Body of pancreas (tissue), 4 donors: ENCODE measurements at regions of chr1 and their contacts with region 1.

Region 1: GRCh38 chr1:42747125-42747524 is 7.1 kb upstream of the CLDN19 start:
- DNase-seq: peak; percentile 44 to 60 (median 46)
- ATAC-seq: no peak
- H3K4me3 ChIP-seq: no peak overlapping the region
- H3K27ac ChIP-seq: no peak overlapping the region
- H3K4me1 ChIP-seq: no peaks in the 10 kb centered on the region
- H3K27me3 ChIP-seq: no peaks in the 10 kb centered on the region
- CTCF ChIP-seq: peak; percentile 31 to 59 (median 54)
- POLR2A ChIP-seq: no peak

Region 2: DNA sequence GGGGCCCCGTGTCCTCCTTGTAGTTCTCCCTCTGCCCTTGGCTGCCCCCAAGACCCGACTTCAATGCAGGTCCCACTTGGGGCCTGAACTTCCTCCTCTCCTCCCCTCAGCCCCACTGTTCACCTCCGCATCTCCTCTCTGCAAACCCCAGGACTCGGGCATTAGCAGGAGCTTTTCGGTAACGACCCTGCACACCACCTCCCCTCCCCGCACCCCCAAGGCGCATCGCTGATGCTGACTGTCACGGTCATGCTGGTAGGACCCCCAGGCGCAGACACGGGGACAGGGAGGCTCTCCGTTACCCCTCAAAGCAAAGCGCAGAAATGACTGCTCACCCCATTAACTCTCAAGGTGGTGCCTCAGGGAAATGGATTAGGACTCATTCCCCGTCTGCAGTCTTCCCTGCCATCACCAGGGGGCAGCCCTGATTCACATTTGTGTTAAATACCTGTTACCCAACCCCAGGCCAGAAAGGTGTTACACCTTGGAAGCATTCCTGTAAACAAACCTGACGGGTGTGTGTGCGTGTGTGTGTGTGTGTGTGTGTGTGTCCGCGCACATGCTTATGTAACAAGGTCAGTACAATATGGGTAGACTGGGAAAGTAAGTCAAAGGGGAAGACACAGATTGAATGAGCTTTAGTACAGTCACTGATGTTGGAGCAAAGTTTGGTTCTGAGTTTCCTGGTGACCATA is 600.4 kb before region 1 on chr1:
- intact Hi-C with region 1: loop called (anchors 10 kb)
- DNase-seq: peak; percentile 94 to 97 (median 96)
- ATAC-seq: peak; percentile 98
- H3K4me3 ChIP-seq: no peak overlapping the region
- H3K27ac ChIP-seq: peak overlapping the region in 1 of 4 donors; percentile 38
- H3K4me1 ChIP-seq: peaks cover 15% of the 10 kb centered on the region
- H3K27me3 ChIP-seq: no peaks in the 10 kb centered on the region
- CTCF ChIP-seq: peak; percentile 62 to 99 (median 99)
- POLR2A ChIP-seq: no peak

Region 3: DNA sequence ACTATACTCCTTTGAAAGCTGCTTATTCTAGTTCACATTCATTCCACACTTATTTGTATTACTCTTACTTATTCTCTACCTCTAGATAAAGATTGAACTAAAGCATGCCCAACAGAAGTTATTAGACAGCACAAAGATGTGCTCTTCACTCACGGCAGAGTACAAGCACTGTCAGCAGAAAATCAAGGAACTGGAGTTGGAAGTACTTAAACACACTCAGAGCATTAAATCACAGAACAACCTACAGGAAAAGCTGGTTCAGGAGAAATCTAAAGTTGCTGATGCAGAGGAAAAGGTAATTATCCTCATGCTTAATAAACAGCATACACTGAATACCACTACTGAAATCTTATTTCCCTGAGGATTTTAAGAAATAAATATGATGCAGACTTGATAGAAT is 170.2 kb before region 1 on chr1:
- intact Hi-C with region 1: loop called (anchors 10 kb)
- DNase-seq: no peak
- ATAC-seq: no peak
- H3K4me3 ChIP-seq: no peak overlapping the region
- H3K27ac ChIP-seq: no peak overlapping the region
- H3K4me1 ChIP-seq: no peaks in the 10 kb centered on the region
- H3K27me3 ChIP-seq: no peaks in the 10 kb centered on the region
- CTCF ChIP-seq: no peak
- POLR2A ChIP-seq: no peak